Heart left ventricle (tissue), 16 donors: ENCODE measurements at regions of chr17 and their contacts with region 1.

Region 1: GRCh38 chr17:79045842-79046196 is 21.9 kb downstream of the C1QTNF1 start:
- DNase-seq: peak; percentile 77 to 89 (median 77)
- ATAC-seq: peak; percentile 60 to 77 (median 68)
- H3K4me3 ChIP-seq: peak overlapping the region in 3 of 12 donors; percentile 11 to 39 (median 27)
- H3K27ac ChIP-seq: peak overlapping the region in 11 of 12 donors; percentile 45 to 76 (median 65)
- H3K4me1 ChIP-seq: peaks cover 6 to 47% (median 24%) of the 10 kb centered on the region in 12 donors
- H3K27me3 ChIP-seq: no peaks in the 10 kb centered on the region
- CTCF ChIP-seq: peak; percentile 92 to 98 (median 95)
- POLR2A ChIP-seq: no peak

Region 2: GRCh38 chr17:78986048-78986648 is 59.7 kb before region 1 on chr17:
- intact Hi-C with region 1: loop called in 3 of 10 experiments (anchors 2 to 5 kb)
- DNase-seq: peak in 2 of 5 donors; percentile 58 to 61
- ATAC-seq: peak; percentile 45 to 82 (median 74)
- H3K4me3 ChIP-seq: peak overlapping the region in 11 of 12 donors; percentile 33 to 70 (median 47)
- H3K27ac ChIP-seq: peak overlapping the region; percentile 66 to 90 (median 82)
- H3K4me1 ChIP-seq: peaks cover 7 to 35% (median 18%) of the 10 kb centered on the region in 12 donors
- H3K27me3 ChIP-seq: no peaks in the 10 kb centered on the region
- CTCF ChIP-seq: peak; percentile 24 to 61 (median 46)
- POLR2A ChIP-seq: no peak

Region 3: DNA sequence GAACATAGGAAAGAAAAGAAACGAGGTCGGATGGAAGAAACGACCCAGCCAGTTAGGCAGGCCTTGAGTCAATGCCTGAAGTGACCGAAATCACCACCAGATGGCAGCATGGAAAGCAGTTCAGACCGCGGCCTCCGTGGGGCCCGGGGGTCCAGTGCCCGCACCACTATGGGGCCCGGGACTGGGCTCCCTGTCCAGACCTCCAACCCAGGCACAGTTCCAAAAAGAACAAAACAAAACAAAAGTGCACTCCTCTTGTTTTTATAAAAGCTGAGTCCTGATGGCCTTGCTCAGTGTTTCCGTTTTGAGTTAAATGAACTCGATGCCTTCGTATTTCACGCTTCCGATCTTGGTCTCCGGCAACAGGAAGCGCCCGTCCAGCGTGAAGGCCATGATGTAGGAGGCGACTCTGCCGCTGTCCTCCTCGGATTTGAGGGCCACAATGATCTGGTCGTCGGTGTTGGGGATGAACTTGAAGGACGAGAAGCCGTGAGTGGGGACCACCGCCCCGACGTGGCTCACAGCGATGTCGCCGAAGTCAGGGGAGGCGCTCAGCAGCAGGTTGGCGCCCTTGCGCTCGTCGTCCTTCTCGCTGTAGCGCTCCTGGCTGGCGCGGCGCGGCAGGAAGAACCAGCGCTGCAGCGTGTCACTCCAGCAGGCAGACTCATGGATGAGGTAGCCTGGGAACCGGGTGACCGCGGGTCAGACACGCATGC is 52.4 kb before region 1 on chr17:
- intact Hi-C with region 1: loop called in 2 of 10 experiments (anchors 2 to 5 kb)
- DNase-seq: peak in 2 of 5 donors; percentile 63 to 66
- ATAC-seq: peak in 3 of 4 donors; percentile 30 to 43 (median 31)
- H3K4me3 ChIP-seq: no peak overlapping the region
- H3K27ac ChIP-seq: no peak overlapping the region
- H3K4me1 ChIP-seq: peaks cover 0 to 29% (median 14%) of the 10 kb centered on the region in 12 donors
- H3K27me3 ChIP-seq: no peaks in the 10 kb centered on the region
- CTCF ChIP-seq: peak; percentile 61 to 86 (median 74)
- POLR2A ChIP-seq: no peak

Region 4: DNA sequence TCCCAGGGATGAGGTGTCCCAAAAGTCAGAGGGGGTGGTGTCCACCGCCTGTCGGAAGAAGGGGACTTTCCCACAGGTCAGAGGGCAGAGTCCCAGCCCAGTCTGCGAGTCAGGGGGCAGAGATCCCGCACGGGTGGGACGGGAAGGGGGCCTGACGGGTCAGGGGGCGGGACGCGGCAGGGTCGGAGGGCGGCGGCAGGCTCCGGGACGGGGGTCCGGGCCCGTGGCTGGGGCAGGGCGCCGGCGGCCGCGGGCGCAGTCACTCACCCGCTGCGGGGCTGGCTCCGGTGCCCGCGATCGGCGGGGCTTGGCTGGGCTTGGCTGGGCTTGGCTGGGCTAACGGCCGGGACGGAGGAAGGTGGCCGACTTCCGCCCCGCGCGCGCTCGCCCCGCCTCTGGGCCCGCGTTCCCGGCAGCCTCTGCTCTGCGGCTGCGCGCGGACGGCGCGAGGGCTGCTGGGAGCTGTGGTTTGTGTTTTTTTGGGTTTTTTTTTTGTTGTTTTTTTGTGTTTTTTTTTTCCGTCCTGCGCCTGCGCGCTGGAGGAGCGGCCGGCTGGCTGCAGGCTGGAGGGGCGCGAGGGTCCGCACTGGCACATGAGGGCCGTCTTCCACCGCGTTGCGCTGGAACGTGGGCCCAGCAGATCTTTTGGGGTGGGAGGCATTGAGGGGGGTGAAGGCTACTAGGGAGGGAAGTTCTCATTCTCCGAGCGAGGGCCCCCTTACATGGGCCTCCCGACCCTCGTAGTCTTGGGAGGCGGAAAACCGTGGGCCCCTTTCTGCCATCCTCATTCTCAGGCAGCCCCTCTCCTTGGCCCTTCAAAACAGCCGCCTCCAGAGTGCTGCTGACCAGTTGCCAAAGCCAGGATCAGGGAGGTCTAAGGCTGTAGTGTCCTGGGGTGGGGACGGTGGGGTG is 36.2 kb before region 1 on chr17 and contains the start of gene CANT1:
- intact Hi-C with region 1: no loop called
- DNase-seq: peak; percentile 86 to 93 (median 88)
- ATAC-seq: peak; percentile 81 to 97 (median 96)
- H3K4me3 ChIP-seq: peak within 1 kb of the TSS; percentile 57 to 100 (median 83)
- H3K27ac ChIP-seq: peak within 1 kb of the TSS; percentile 68 to 94 (median 88)
- H3K4me1 ChIP-seq: peaks cover 7 to 48% (median 33%) of the 10 kb centered on the region in 12 donors
- H3K27me3 ChIP-seq: no peaks in the 10 kb centered on the region
- CTCF ChIP-seq: no peak
- POLR2A ChIP-seq: peak in 1 of 2 donors; percentile 60
- total RNA-seq, gene CANT1: 20.4 to 43.7 (median 24.1) TPM

Region 5: DNA sequence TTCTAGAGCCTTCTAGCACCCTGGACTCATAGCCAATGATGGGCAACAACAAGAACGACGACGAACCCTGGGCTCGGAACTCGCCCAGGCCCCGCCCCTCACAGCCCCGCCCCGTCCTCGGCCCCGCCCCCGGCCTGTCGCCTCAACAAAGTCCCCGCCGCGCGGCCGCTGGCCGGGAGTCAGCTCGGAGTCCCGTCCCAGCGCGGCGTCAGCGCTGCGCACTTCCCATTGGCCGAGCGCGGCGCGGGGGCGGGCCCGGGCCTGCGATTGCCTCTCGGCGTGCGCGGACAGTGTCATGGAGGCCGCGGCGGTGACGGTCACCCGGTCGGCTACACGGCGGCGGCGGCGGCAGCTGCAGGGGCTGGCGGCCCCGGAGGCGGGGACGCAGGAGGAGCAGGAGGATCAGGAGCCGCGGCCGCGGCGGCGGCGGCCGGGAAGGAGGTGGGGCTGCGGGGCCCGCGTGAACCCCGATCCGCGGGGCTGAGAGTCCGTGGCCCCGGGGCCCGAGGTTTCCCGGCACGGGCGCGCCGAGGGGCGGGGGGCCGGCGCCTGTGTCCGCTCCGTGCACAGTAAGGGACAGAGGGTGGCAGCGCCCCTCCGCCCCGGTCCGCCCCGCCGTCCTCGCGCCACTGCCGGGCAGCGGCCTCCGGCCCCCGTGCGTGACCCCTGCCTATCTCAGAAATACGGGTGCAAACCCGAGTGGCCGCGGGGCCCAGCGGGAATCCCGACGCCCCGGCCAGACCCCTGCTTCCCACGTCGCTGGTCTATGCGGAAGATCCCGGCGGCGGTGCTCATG is 29.0 kb after region 1 on chr17 and contains the start of gene ENGASE:
- intact Hi-C with region 1: loop called in 7 of 10 experiments (anchors 2 to 5 kb)
- DNase-seq: peak; percentile 96 to 98 (median 96)
- ATAC-seq: peak; percentile 88 to 99 (median 98)
- H3K4me3 ChIP-seq: peak within 1 kb of the TSS; percentile 48 to 99 (median 86)
- H3K27ac ChIP-seq: peak within 1 kb of the TSS; percentile 67 to 96 (median 90)
- H3K4me1 ChIP-seq: peaks cover 0 to 25% (median 14%) of the 10 kb centered on the region in 12 donors
- H3K27me3 ChIP-seq: no peaks in the 10 kb centered on the region
- CTCF ChIP-seq: no peak
- POLR2A ChIP-seq: peak in 1 of 2 donors; percentile 75
- total RNA-seq, gene ENGASE: 6.2 to 42.0 (median 25.5) TPM

Region 6: DNA sequence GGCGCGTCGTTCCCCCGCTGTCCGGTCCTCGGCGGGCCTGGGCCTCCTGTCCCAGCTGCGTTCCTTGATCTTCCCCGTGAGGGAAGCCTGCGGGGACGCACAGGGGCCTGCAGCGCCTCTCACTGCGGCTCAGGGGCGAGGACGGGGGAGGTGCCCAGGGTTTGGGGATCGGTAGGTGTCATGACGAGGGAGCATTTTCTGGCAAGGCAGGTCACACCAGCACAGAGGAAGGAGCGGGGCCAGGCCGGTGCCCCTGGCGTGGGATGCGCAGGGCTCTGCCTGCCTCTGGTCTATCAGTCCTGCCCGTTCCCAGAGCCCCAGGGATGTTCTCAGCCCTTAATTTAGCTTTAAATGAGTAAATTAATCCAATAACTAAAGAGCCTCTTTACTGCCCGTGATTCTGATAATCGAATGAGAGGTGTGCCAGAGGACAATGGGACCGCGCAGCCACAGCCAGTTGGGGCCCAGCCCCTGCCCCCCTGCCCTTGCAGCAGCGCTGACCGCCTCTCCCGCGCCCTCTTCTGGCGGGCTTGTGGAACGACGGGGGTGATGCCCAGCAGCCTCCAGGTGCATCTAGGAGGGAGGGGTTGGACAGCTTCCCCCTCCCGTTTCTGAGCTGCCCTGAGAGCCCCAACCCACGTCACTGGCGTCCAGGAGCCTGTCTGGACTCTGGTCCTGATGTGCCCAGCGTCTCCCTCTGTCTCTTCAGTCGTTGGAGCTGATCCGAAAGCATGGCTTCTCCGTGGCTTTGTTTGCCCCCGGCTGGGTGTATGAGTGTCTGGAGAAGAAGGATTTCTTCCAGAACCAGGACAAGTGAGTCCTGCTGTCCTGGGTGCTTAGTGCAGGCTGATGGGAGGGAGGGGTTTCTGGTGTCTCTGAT is 36.7 kb after region 1 on chr17:
- intact Hi-C with region 1: loop called in 9 of 10 experiments (anchors 2 to 5 kb)
- DNase-seq: peak in 4 of 5 donors; percentile 42 to 75 (median 58)
- ATAC-seq: peak in 3 of 4 donors; percentile 36 to 60 (median 58)
- H3K4me3 ChIP-seq: no peak overlapping the region
- H3K27ac ChIP-seq: peak overlapping the region in 1 of 12 donors; percentile 22
- H3K4me1 ChIP-seq: peaks cover 0 to 17% (median 8%) of the 10 kb centered on the region in 12 donors
- H3K27me3 ChIP-seq: no peaks in the 10 kb centered on the region
- CTCF ChIP-seq: peak; percentile 75 to 86 (median 79)
- POLR2A ChIP-seq: no peak